GM12878 (cell line): ENCODE measurements at regions of chr12 and their contacts with region 1.

Region 1: GRCh38 chr12:119036878-119037825 is 55.8 kb downstream of the SRRM4 start:
- DNase-seq: no peak
- ATAC-seq: 0 out of 3 replicates have a peak, but pooled peaks have one; percentile 42
- H3K4me3 ChIP-seq: no peak overlapping the region
- H3K27ac ChIP-seq: no peak overlapping the region
- H3K4me1 ChIP-seq: no peaks in the 10 kb centered on the region
- H3K27me3 ChIP-seq: no peaks in the 10 kb centered on the region
- CTCF ChIP-seq: peak; percentile 51 to 55 (median 52)
- EP300 ChIP-seq: no peak
- POLR2A ChIP-seq: no peak
- RAD21 ChIP-seq: peak; percentile 41

Region 2: GRCh38 chr12:118120579-118121363 is 916.4 kb before region 1 on chr12:
- CTCF ChIA-PET with region 1: interaction called, 6 read pairs
- POLR2A ChIA-PET with region 1: no interaction called
- RAD21 ChIA-PET with region 1: interaction called, 3 read pairs
- SMC1A ChIA-PET with region 1: no interaction called
- in situ Hi-C with region 1: loop called (anchors 25 kb)
- intact Hi-C with region 1: no loop called
- DNase-seq: no peak
- ATAC-seq: peak; percentile 97
- H3K4me3 ChIP-seq: no peak overlapping the region
- H3K27ac ChIP-seq: peak overlapping the region; percentile 83
- H3K4me1 ChIP-seq: no peaks in the 10 kb centered on the region; the same call in 1 of the 2 replicates
- H3K27me3 ChIP-seq: no peaks in the 10 kb centered on the region
- CTCF ChIP-seq: peak; percentile 50 to 70 (median 64)
- EP300 ChIP-seq: no peak
- POLR2A ChIP-seq: no peak
- RAD21 ChIP-seq: peak; percentile 70

Region 3: GRCh38 chr12:118874698-118875548 is 162.2 kb before region 1 on chr12:
- CTCF ChIA-PET with region 1: no interaction called
- POLR2A ChIA-PET with region 1: no interaction called
- RAD21 ChIA-PET with region 1: no interaction called
- SMC1A ChIA-PET with region 1: no interaction called
- in situ Hi-C with region 1: no loop called
- intact Hi-C with region 1: no loop called
- DNase-seq: no peak
- ATAC-seq: no peak
- H3K4me3 ChIP-seq: no peak overlapping the region
- H3K27ac ChIP-seq: no peak overlapping the region
- H3K4me1 ChIP-seq: no peaks in the 10 kb centered on the region
- H3K27me3 ChIP-seq: no peaks in the 10 kb centered on the region
- CTCF ChIP-seq: no peak
- EP300 ChIP-seq: no peak
- POLR2A ChIP-seq: no peak
- RAD21 ChIP-seq: no peak

Region 4: GRCh38 chr12:119055977-119056376 is 18.8 kb after region 1 on chr12:
- CTCF ChIA-PET with region 1: no interaction called
- POLR2A ChIA-PET with region 1: no interaction called
- RAD21 ChIA-PET with region 1: no interaction called
- SMC1A ChIA-PET with region 1: no interaction called
- in situ Hi-C with region 1: no loop called
- intact Hi-C with region 1: loop called (anchors 1 kb)
- DNase-seq: no peak
- ATAC-seq: no peak
- H3K4me3 ChIP-seq: no peak overlapping the region
- H3K27ac ChIP-seq: no peak overlapping the region
- H3K4me1 ChIP-seq: no peaks in the 10 kb centered on the region
- H3K27me3 ChIP-seq: no peaks in the 10 kb centered on the region
- CTCF ChIP-seq: no peak
- EP300 ChIP-seq: no peak
- POLR2A ChIP-seq: no peak
- RAD21 ChIP-seq: no peak

Region 5: GRCh38 chr12:119308708-119309456 is 271.7 kb after region 1 on chr12:
- CTCF ChIA-PET with region 1: no interaction called
- POLR2A ChIA-PET with region 1: no interaction called
- RAD21 ChIA-PET with region 1: no interaction called
- SMC1A ChIA-PET with region 1: no interaction called
- in situ Hi-C with region 1: no loop called
- intact Hi-C with region 1: no loop called
- DNase-seq: no peak
- ATAC-seq: no peak
- H3K4me3 ChIP-seq: no peak overlapping the region
- H3K27ac ChIP-seq: no peak overlapping the region
- H3K4me1 ChIP-seq: no peaks in the 10 kb centered on the region
- H3K27me3 ChIP-seq: no peaks in the 10 kb centered on the region
- CTCF ChIP-seq: no peak
- EP300 ChIP-seq: no peak
- POLR2A ChIP-seq: no peak
- RAD21 ChIP-seq: no peak